Right ventricle myocardium inferior (tissue), 1 donor: ENCODE measurements at regions of chr2 and their contacts with region 1.

Region 1: DNA sequence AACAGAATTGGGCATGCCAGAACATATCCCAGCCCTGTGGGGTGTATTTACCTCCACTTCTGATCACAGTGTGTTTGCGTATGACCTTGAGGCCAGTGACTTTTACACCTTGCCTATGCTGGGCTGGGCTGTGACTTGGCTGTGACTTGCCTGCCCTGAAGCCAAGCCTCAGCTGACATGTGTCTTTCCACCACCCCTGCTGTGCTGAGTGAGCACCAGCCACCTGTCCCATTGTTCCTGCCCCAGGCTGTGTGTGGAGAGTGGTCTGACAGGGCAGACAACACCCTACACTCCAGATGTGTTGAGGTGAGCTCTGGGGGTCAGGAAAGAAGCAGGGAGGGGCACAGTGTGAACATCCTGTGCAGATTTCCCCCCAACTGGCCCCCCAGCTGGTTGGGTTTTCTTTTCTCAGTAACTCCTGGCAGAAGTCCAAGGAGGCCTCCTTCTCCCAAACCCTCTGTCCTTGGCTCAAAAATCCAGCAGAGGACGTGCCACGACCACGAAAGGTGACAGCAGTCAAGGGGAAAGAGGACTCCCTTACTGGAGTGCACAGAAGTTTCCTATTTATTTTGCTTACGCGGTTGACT is 5.1 kb upstream of the STEAP3 start:
- DNase-seq: no peak
- ATAC-seq: peak; percentile 40

Region 2: DNA sequence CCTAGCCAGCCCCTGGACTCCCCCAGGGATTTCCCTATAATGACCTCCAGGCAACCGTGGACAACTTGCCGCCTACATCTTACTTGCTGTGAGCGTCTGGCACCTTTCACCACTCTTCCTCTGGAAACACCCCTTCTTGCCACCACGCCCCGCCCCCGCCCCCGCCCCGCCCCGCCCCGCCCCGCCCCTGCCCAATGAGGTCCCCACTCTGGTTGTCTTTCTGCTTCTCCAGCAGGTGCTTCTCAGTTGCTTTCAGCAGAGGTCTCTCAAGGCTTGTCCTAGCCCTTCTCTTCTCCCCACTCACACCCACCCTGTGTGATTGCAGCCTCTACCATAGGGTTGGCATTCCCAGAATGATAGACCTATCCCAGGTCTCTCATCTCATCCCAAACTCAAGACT is 585.6 kb before region 1 on chr2:
- intact Hi-C with region 1: no loop called
- DNase-seq: no peak
- ATAC-seq: no peak

Region 3: DNA sequence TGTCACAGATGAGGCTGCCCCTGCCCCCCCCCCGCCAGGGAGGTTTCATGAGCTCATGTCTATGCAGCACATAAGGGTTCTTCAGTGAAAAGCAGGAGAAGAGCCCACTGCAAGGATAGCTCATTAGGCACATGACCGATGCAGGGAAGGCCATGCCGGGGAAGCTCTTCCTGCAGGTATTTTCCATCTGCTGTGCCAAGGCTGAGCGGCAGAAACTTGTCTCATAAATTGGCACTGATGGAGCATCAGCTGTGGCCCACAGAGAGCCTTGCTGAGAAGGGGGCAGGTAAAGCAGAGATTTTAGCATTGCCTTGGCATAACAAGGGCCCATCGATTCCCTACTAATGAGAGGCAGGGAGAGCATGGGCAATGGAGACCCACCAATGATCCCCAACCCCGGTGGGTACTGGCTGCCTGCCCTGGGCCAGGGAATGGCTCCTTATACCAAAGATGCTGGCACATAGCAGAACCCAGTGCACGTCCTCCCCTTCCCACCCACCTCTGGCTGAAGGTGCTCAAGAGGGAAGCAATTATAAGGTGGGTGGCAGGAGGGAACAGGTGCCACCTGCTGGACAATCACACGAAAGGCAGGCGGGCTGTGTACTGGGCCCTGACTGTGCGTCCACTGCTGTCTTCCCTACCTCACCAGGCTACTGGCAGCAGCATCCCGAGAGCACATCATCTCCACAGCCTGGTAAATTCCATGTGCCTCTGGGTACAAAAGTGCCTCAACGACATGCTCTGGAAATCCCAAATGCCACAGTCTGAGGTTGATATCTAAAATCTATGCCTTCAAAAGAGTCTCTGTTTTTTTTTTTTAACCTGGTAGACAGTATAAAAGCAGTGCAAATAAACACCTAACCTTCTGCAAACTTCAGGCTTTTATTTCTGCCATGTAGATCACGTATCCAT is 46.5 kb after region 1 on chr2:
- intact Hi-C with region 1: loop called (anchors 1 kb)
- DNase-seq: peak; percentile 68
- ATAC-seq: peak; percentile 80

Region 4: DNA sequence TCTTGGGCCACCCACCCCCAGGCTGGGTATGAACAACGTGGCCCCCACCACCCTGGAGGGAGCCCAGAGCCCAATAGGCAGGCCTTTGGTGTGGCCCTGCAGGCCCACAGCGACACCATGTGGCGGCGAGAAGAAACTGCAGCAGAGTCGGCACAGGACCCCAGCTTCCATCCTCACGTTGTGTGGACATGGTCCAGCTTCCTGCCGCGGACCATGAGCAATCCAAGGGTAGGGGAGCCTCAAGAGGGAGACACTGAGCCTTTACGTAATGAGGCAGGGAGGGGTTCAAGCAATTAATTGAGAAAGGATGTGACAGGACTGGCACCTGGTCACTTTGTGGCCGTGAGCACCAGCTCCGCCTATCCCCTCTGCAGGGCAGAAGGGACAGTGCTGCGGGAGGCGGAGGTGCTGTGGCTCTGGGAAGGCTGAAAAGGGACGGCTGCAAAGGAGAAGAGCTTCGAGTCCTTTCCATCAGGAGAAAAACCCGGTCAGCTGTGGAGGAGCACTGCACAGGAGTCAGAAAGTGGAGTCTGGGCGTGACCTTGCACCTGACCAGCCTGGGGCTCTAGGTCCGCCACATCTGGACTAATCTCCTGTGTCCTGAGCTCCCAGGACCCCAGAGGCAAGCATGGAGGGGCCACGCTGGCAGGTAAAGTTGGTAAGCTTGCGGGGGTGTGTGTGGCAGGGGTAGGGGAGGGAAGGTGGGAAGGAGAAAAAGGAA is 257.9 kb after region 1 on chr2:
- intact Hi-C with region 1: loop called (anchors 5 kb)
- DNase-seq: no peak
- ATAC-seq: peak; percentile 53